HEK293T (cell line): ENCODE measurements at regions of chr10 and their contacts with region 1.

Region 1: DNA sequence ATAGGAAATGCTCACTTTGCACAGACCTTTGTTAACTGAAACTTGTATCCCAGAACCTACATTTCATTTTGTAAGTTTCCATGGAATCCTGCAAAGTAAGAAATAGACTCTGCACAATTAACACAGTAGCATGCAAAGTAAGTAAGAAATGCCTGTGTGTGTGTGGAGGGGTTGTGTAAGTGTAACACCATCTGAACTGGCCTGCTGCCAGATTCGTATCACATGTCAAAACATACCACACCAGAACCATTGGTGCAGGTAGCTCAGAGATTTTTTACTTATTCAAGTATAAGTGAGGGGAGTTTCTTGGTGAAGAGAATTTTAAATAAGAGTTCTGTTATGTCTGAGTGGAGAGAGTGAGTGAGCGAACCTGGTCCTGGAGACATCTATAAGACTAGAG is 17.9 kb upstream of the DDX21 start:
- DNase-seq: no peak

Region 2: DNA sequence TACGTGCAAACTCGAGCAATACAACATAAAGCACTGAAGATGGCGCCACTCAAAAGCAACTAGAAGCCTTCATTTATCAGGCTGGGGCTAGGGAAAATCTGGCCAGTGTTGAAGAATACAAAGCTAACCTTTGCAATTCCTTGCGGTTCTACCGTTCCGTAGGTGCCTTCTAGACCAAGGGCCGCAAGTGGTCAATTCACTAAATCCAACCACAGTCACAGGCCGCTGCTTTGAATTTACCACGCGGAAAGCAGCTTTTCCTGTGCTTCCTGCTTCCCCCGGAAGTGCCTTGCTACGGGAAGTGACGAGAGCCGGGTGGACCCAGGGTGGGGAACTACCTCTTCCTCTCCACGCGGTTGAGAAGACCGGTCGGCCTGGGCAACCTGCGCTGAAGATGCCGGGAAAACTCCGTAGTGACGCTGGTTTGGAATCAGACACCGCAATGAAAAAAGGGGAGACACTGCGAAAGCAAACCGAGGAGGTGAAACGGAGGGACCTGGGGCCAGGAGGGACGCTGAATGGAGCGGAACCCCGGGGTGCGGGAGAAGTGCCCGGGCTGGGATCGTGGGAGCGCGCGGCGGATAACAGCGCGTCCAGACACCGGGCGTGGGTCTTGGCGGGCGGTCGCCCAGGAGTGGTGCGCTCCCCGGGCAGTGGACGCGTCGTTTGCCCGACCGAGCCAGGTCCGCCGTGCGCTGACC is 17.9 kb after region 1 on chr10 and contains the start of gene DDX21:
- CTCF ChIA-PET with region 1: no interaction called
- POLR2A ChIA-PET with region 1: interaction called, 12 read pairs
- DNase-seq: peak; percentile 88

Region 3: GRCh38 chr10:69018613-69019012 is 80.5 kb after region 1 on chr10:
- CTCF ChIA-PET with region 1: no interaction called
- POLR2A ChIA-PET with region 1: no interaction called
- DNase-seq: no peak